Activated CD4-positive, alpha-beta memory T cell treated with anti-CD3 and anti-CD28 coated beads for 36 hours (primary cell): ENCODE measurements at regions of chr14 and their contacts with region 1.

Region 1: GRCh38 chr14:58244556-58245387 is at the start of gene PSMA3:
- DNase-seq: peak; percentile 99
- H3K4me3 Mint-ChIP-seq: peak within 1 kb of the TSS; percentile 86
- H3K27ac Mint-ChIP-seq: peak within 1 kb of the TSS; percentile 90
- H3K4me1 Mint-ChIP-seq: peaks cover 42% of the 10 kb centered on the region
- H3K27me3 Mint-ChIP-seq: no peaks in the 10 kb centered on the region
- total RNA-seq, gene PSMA3: 349 to 355 TPM

Region 2: DNA sequence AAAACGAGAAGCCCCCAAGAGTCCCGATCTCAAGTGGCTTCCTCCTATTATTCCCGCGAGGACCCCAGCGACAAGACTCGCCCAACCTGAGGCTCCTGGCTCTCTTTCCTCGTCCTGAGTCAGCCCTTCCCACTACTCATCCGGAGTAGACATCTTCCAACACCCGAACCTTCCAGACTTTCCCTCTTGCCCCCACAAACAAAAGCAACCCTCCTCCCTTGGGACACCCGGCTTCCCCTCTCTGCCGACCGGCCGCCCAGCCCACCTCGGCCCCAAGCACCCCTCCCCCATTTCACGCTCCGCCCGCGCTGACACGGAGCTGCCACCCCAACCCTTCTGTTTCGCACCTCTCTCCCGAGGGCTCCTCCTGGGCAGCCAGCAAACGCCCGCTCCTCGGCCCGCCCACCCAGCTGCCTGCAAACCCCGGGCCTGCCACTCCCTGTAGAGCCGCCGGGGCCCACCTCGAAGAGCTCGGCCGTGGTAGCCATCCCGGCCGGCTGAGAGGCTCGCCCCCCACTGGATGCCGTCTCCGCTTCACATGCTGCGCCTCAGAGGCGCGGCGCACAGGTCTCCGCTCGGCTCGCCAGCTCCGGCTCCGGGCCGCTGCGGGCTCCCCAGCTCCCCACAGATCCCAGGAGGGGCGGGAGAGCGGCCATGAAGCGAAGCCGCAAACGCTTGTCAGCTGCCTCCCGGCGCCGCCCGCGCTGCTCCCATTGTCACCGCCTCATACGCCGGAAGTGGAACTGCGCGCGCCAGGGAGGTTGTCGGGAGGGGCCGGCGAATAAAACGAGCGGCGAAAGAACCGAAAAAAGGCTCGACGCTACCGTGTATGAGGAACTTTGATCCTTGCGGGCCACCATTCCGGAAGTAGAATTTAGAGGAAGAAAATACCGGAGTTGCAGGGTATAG is 976.4 kb before region 1 on chr14 and contains the starts of genes AP5M1 and EXOC5:
- CTCF ChIA-PET with region 1: no interaction called
- POLR2A ChIA-PET with region 1: no interaction called
- intact Hi-C with region 1: loop called (anchors 2 kb)
- DNase-seq: peak; percentile 96
- H3K4me3 Mint-ChIP-seq: peak within 1 kb of the TSS; percentile 99
- H3K27ac Mint-ChIP-seq: peak within 1 kb of the TSS; percentile 99
- H3K4me1 Mint-ChIP-seq: peaks cover 48% of the 10 kb centered on the region
- H3K27me3 Mint-ChIP-seq: no peaks in the 10 kb centered on the region
- total RNA-seq, gene AP5M1: 27.7 to 31.1 TPM
- total RNA-seq, gene EXOC5: 82.1 to 82.6 TPM

Region 3: DNA sequence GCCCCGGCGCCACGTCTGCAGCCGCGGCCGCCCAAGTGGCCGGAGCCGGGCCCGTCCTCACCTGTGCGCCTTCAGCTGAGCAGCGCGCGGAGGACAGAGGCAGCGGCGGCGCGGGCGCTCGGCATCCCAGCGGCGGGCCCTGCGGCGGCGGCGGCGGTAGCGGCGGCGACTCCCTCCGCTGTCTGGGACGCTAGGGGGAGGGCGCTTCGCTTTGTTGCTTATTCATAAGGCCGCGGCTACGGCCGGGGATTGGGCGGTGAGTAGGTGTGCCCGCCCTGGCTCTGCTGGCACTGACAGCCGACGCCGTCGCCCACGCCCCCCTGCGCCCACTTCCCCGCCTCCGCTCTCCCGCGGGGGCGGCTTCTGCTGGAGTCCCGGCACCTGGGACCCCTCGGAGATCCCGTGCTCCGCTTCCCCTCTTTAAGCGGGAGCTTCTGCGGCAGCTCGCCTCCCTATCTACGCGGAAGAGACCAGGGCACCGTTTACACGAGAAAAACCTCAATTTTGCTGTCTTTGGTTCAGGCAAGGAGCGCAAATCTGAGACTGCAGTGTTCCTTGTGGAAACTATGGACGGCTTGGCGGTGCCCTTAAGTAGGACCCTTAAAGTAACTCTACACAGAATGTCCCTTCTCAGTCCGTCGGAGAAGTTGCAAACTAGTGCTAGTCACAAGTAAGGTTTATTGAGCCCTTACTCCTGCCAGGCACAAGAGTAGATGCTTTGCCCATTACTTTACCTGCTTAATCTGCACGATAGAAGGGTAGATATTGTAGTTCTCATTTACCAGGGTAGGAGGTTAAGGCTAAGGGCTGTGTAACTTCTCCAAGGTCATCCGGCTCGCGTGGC is 92.5 kb before region 1 on chr14 and contains the start of gene ARMH4:
- CTCF ChIA-PET with region 1: no interaction called
- POLR2A ChIA-PET with region 1: no interaction called
- intact Hi-C with region 1: loop called (anchors 5 kb)
- DNase-seq: peak; percentile 77
- H3K4me3 Mint-ChIP-seq: peak within 1 kb of the TSS; percentile 71
- H3K27ac Mint-ChIP-seq: no peak within 1 kb of the TSS
- H3K4me1 Mint-ChIP-seq: peaks cover 16% of the 10 kb centered on the region
- H3K27me3 Mint-ChIP-seq: peaks cover 52% of the 10 kb centered on the region
- total RNA-seq, gene ARMH4: 0.29 TPM in 1 of 2 experiments, not detected in the other

Region 4: GRCh38 chr14:58191763-58192601 is 52.8 kb before region 1 on chr14:
- CTCF ChIA-PET with region 1: no interaction called
- POLR2A ChIA-PET with region 1: no interaction called
- intact Hi-C with region 1: no loop called
- DNase-seq: no peak
- H3K4me3 Mint-ChIP-seq: no peak overlapping the region
- H3K27ac Mint-ChIP-seq: no peak overlapping the region
- H3K4me1 Mint-ChIP-seq: no peaks in the 10 kb centered on the region
- H3K27me3 Mint-ChIP-seq: no peaks in the 10 kb centered on the region

Region 5: DNA sequence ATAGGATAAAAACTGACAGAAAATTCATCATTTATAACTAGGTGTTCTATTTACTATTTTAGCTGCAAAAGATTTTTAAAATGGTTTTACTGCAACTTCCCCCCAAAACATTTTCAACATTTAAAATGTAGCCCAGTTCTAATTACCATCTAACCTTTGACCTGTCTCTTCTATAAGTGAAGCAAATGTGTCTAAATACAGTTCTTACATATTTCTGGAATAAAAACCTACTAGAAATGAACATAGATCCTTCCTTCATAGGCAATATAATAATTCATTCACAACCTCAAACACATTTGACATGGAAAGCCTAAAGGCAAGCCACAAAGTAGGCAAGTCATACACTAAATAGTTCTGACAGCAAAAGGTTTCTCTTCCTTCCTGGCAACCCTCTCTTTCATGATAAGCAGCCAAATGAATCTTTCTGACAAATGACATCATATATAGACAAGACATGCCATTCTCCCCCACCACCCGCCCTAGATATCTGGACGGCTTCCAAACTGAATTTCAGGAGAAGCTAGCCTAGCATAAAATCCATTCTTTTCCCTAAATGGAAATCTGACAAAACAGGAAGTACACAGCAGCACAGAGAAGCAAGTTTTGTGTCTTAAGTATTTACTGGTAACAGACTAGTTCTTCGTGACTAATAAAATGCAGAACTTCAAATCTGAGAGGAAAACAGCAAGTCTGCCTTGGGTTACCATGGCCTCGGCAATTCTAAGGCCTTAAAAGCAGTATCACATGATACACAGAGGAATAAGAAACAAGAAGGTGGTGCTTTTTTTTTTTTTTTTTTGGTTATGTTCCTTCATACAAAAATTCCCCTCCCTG is 36.4 kb after region 1 on chr14:
- CTCF ChIA-PET with region 1: interaction called, 3 read pairs
- POLR2A ChIA-PET with region 1: interaction called, 4 read pairs
- intact Hi-C with region 1: loop called (anchors 1 kb)
- DNase-seq: peak; percentile 56
- H3K4me3 Mint-ChIP-seq: peak overlapping the region; percentile 37
- H3K27ac Mint-ChIP-seq: peak overlapping the region; percentile 91
- H3K4me1 Mint-ChIP-seq: peaks cover 66% of the 10 kb centered on the region
- H3K27me3 Mint-ChIP-seq: no peaks in the 10 kb centered on the region

Region 6: GRCh38 chr14:59189786-59190771 is 945.3 kb after region 1 on chr14:
- CTCF ChIA-PET with region 1: no interaction called
- POLR2A ChIA-PET with region 1: interaction called, 3 read pairs
- intact Hi-C with region 1: loop called (anchors 1 kb)
- DNase-seq: peak; percentile 86
- H3K4me3 Mint-ChIP-seq: peak overlapping the region; percentile 93
- H3K27ac Mint-ChIP-seq: peak overlapping the region; percentile 49
- H3K4me1 Mint-ChIP-seq: peaks cover 6% of the 10 kb centered on the region
- H3K27me3 Mint-ChIP-seq: peaks cover 3% of the 10 kb centered on the region